Astrocyte of the cerebellum (primary cell): ENCODE measurements at regions of chr5 and their contacts with region 1.

Region 1: DNA sequence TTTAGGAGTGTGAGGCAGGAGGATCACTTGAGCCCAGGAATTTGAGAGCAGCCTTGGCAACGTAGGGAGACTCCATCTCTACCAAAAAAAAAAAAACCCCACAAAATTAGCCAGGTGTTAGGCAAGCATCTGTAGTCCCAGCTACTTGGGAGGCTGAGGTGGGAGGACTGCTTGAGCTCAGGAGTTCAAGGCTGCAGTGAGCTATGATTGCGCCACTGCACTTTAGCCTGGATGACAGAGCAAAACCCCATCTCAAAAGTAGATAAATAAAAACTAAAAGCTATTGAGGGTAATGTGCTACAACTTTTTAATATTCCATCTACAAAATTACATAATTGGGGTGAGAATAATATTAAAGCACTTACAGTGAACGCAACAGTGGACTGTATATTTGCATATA is 5.9 kb downstream of the BDP1 start:
- DNase-seq: no peak
- H3K4me3 ChIP-seq: no peak overlapping the region
- CTCF ChIP-seq: no peak

Region 2: GRCh38 chr5:71508751-71509150 is 47.4 kb after region 1 on chr5:
- in situ Hi-C with region 1: loop called (anchors 5 kb)
- DNase-seq: no peak
- H3K4me3 ChIP-seq: no peak overlapping the region
- CTCF ChIP-seq: no peak